ENCODE measurements at regions of chr4 and their contacts with region 1.

Region 1: GRCh38 chr4:75724066-75724866 is at the start of gene USO1:
- DNase-seq: peak; percentile 98 to 100 (median 99)
- ATAC-seq: peak; percentile 92
- H3K4me3 ChIP-seq: peak within 1 kb of the TSS; percentile 58 to 99
- H3K4me3 Mint-ChIP-seq: peak within 1 kb of the TSS; percentile 99
- H3K27ac ChIP-seq: peak within 1 kb of the TSS; percentile 70 to 93
- H3K27ac Mint-ChIP-seq: peak within 1 kb of the TSS; percentile 99
- H3K4me1 ChIP-seq: peaks cover 32% of the 10 kb centered on the region
- H3K4me1 Mint-ChIP-seq: peaks cover 54% of the 10 kb centered on the region
- H3K27me3 ChIP-seq: no peaks in the 10 kb centered on the region
- H3K27me3 Mint-ChIP-seq: no peaks in the 10 kb centered on the region
- CTCF ChIP-seq: peak; percentile 79
- total RNA-seq, gene USO1: 9.8 to 10.2 TPM

Region 2: GRCh38 chr4:74904509-74905065 is 819.7 kb before region 1 on chr4:
- CTCF ChIA-PET with region 1: no interaction called
- POLR2A ChIA-PET with region 1: no interaction called
- intact Hi-C with region 1: no loop called
- DNase-seq: no peak
- ATAC-seq: no peak
- H3K4me3 ChIP-seq: no peak overlapping the region
- H3K4me3 Mint-ChIP-seq: no peak overlapping the region
- H3K27ac ChIP-seq: no peak overlapping the region
- H3K27ac Mint-ChIP-seq: no peak overlapping the region
- H3K4me1 ChIP-seq: no peaks in the 10 kb centered on the region
- H3K4me1 Mint-ChIP-seq: no peaks in the 10 kb centered on the region
- H3K27me3 ChIP-seq: no peaks in the 10 kb centered on the region
- H3K27me3 Mint-ChIP-seq: peaks cover 3% of the 10 kb centered on the region
- CTCF ChIP-seq: no peak

Region 3: GRCh38 chr4:75514131-75514948 is 209.9 kb before region 1 on chr4 and contains the starts of genes RCHY1 and THAP6:
- CTCF ChIA-PET with region 1: no interaction called
- POLR2A ChIA-PET with region 1: interaction called, 15 read pairs
- intact Hi-C with region 1: loop called (anchors 1 kb)
- DNase-seq: peak; percentile 84 to 97 (median 92)
- ATAC-seq: peak; percentile 87
- H3K4me3 ChIP-seq: peak within 1 kb of the TSS; percentile 92 to 94
- H3K4me3 Mint-ChIP-seq: no peak within 1 kb of the TSS
- H3K27ac ChIP-seq: peak within 1 kb of the TSS; percentile 96 to 98
- H3K27ac Mint-ChIP-seq: peak within 1 kb of the TSS; percentile 99
- H3K4me1 ChIP-seq: peaks cover 55% of the 10 kb centered on the region
- H3K4me1 Mint-ChIP-seq: peaks cover 63% of the 10 kb centered on the region
- H3K27me3 ChIP-seq: no peaks in the 10 kb centered on the region
- H3K27me3 Mint-ChIP-seq: no peaks in the 10 kb centered on the region
- CTCF ChIP-seq: no peak
- total RNA-seq, gene RCHY1: 45.4 to 52.8 TPM
- total RNA-seq, gene THAP6: 15.3 to 16.3 TPM

Region 4: GRCh38 chr4:75630174-75630936 is 93.9 kb before region 1 on chr4 and contains the start of gene CDKL2:
- CTCF ChIA-PET with region 1: interaction called, 3 read pairs
- POLR2A ChIA-PET with region 1: interaction called, 7 read pairs
- intact Hi-C with region 1: loop called (anchors 1 kb)
- DNase-seq: peak; percentile 85 to 96 (median 95)
- ATAC-seq: peak; percentile 99
- H3K4me3 ChIP-seq: peak within 1 kb of the TSS; percentile 74 to 82
- H3K4me3 Mint-ChIP-seq: peak within 1 kb of the TSS; percentile 91
- H3K27ac ChIP-seq: peak within 1 kb of the TSS; percentile 51 to 56
- H3K27ac Mint-ChIP-seq: peak within 1 kb of the TSS; percentile 84
- H3K4me1 ChIP-seq: peaks cover 6% of the 10 kb centered on the region
- H3K4me1 Mint-ChIP-seq: peaks cover 15% of the 10 kb centered on the region
- H3K27me3 ChIP-seq: no peaks in the 10 kb centered on the region
- H3K27me3 Mint-ChIP-seq: no peaks in the 10 kb centered on the region
- CTCF ChIP-seq: no peak
- total RNA-seq, gene CDKL2: 0.89 to 1.4 TPM

Region 5: DNA sequence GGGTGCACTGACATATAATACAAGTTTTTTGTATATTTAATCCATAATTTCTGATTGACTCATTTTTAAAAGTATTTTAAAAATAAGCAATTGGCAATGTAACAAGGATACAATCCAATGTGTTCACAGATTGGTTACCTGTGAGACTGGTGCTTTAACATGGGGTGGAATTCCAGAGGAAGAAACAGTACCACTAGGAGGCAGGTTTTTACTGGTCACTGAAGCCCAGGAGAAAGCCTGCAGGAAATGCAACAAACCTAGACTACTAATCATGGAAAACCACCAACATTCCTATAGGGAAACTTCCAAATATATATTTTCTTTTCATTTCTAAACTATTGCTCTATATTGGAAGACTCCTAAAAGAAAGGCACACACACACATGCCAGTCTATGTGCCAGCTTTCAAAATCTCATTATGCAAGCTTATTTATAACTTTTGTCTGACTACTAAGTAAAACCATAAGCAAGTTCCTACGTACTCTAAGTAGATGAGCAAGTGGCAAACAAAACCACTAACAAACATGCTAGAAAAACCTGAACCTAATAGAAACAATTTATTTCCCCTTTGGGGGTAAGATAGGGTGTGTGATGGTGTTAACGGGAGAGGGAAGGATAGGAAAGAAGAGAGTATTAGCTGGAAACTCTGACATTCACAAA is 70.3 kb before region 1 on chr4:
- CTCF ChIA-PET with region 1: interaction called, 23 read pairs
- POLR2A ChIA-PET with region 1: no interaction called
- intact Hi-C with region 1: loop called (anchors 1 to 5 kb)
- DNase-seq: peak in 2 of 9 experiments; percentile 26 to 45
- ATAC-seq: peak; percentile 15
- H3K4me3 ChIP-seq: no peak overlapping the region
- H3K4me3 Mint-ChIP-seq: peak overlapping the region; percentile 29
- H3K27ac ChIP-seq: peak overlapping the region in 1 of 2 experiments; percentile 10
- H3K27ac Mint-ChIP-seq: peak overlapping the region; percentile 95
- H3K4me1 ChIP-seq: peaks cover 57% of the 10 kb centered on the region
- H3K4me1 Mint-ChIP-seq: peaks cover 68% of the 10 kb centered on the region
- H3K27me3 ChIP-seq: no peaks in the 10 kb centered on the region
- H3K27me3 Mint-ChIP-seq: no peaks in the 10 kb centered on the region
- CTCF ChIP-seq: no peak

Region 6: GRCh38 chr4:75686346-75686745 is 37.9 kb before region 1 on chr4:
- CTCF ChIA-PET with region 1: interaction called, 7 read pairs
- POLR2A ChIA-PET with region 1: interaction called, 8 read pairs
- intact Hi-C with region 1: loop called in 1 of 2 experiments (anchors 5 kb)
- DNase-seq: peak in 8 of 9 experiments; percentile 9 to 78 (median 53)
- ATAC-seq: peak; percentile 81
- H3K4me3 ChIP-seq: no peak overlapping the region
- H3K4me3 Mint-ChIP-seq: peak overlapping the region; percentile 17
- H3K27ac ChIP-seq: peak overlapping the region in 1 of 2 experiments; percentile 57
- H3K27ac Mint-ChIP-seq: peak overlapping the region; percentile 71
- H3K4me1 ChIP-seq: peaks cover 38% of the 10 kb centered on the region
- H3K4me1 Mint-ChIP-seq: peaks cover 45% of the 10 kb centered on the region
- H3K27me3 ChIP-seq: no peaks in the 10 kb centered on the region
- H3K27me3 Mint-ChIP-seq: no peaks in the 10 kb centered on the region
- CTCF ChIP-seq: no peak

Region 7: DNA sequence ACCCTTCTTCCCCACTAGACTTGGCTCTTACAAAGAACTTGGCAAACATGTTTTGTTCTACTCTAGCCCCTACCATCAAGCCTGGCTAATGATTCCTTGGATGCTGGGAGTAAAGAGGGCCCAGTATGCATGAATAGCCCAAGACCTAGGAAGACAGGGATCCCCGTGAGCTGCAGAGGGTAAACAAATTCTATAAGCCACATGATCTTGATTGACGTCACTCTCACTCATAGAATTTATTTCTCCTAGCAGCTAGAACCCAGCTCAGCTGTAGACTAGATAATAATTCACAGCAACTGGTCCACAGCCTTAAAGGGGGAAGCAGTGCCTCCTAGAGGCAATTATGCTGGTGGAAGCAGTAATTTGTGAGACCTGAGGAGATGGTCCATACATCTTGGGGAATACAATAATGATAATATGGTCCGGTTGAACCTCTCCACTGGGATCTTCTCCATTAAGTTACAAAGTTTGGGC is 16.0 kb before region 1 on chr4:
- CTCF ChIA-PET with region 1: interaction called, 28 read pairs
- POLR2A ChIA-PET with region 1: interaction called, 7 read pairs
- intact Hi-C with region 1: loop called in 1 of 2 experiments (anchors 1 kb)
- DNase-seq: peak in 8 of 9 experiments; percentile 9 to 82 (median 58)
- ATAC-seq: peak; percentile 96
- H3K4me3 ChIP-seq: no peak overlapping the region
- H3K4me3 Mint-ChIP-seq: no peak overlapping the region
- H3K27ac ChIP-seq: no peak overlapping the region
- H3K27ac Mint-ChIP-seq: peak overlapping the region; percentile 78
- H3K4me1 ChIP-seq: peaks cover 4% of the 10 kb centered on the region
- H3K4me1 Mint-ChIP-seq: peaks cover 8% of the 10 kb centered on the region
- H3K27me3 ChIP-seq: no peaks in the 10 kb centered on the region
- H3K27me3 Mint-ChIP-seq: no peaks in the 10 kb centered on the region
- CTCF ChIP-seq: peak; percentile 75